Aorta (tissue), 5 donors: ENCODE measurements at regions of chr18 and their contacts with region 1.

Region 1: DNA sequence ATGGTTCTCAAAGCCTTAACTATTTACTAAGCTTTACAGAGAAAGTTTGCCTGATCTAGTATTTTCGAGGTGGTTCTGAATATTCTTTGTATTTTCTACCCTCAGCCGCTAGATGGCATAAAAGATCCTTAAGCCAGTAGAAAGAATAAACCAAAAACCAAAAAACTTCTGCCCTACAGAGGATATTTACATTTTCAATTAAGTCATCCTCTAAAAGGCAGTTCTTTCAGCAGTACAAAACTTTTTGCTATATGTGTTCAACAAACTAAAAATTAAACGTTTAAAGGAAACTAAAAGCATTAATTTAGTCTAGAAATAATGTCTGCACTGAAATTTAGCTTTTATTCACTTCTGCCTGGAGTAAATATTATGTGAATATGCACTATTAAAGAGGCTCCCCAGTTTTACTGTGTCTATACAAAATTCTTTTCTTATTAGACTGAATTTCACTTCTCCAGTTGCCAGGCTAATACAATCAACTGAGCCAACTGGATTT is 297.5 kb downstream of the PIEZO2 start:
- DNase-seq: no peak
- ATAC-seq: peak; percentile 67
- H3K4me3 ChIP-seq: no peak overlapping the region
- H3K27ac ChIP-seq: no peak overlapping the region
- H3K4me1 ChIP-seq: no peaks in the 10 kb centered on the region
- H3K27me3 ChIP-seq: no peaks in the 10 kb centered on the region

Region 2: GRCh38 chr18:10936176-10937053 is 84.5 kb after region 1 on chr18:
- intact Hi-C with region 1: no loop called
- DNase-seq: no peak
- ATAC-seq: no peak
- H3K4me3 ChIP-seq: no peak overlapping the region
- H3K27ac ChIP-seq: peak overlapping the region in 1 of 2 donors; percentile 28
- H3K4me1 ChIP-seq: peaks cover 0 to 8% of the 10 kb centered on the region in 2 donors
- H3K27me3 ChIP-seq: no peaks in the 10 kb centered on the region

Region 3: DNA sequence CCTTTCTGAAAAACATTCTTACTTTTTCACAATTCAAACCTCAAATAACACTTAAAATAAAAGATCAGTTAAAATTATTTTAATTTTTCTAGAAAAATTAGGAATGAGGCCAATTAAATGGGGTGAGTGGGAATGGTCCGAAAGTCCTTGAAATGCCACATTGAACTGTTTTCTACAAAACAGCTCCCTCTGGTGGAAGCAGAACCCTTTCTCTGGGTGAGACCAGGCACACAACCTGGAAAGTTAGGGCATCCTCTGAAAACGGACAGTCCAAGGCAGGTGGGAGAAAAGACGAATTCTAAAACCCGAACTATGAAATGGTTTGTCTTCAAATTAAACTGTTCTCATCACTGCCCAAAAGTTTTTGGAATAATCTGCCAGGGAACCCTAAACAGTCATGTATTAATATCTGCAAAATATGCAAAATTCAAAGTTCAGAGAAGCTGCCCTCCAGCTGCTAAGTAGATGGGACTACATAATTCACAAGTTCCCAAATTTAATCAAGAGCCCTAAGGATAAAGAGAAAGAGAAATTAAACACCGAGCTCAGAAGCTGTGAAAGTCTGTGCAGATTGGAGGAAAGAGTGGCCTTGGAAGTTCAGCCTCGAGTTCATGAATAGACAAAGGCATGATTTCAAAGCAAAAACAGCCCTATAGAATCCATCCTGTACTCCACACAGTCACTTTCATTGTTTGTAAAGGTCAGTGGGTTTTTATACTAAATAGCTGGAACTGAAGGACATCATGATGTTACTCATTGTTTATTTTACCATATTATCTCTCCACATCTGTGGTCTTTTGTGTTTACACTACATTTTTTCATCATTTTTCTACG is 189.2 kb after region 1 on chr18:
- intact Hi-C with region 1: loop called (anchors 2 to 5 kb)
- DNase-seq: no peak
- ATAC-seq: peak; percentile 69
- H3K4me3 ChIP-seq: no peak overlapping the region
- H3K27ac ChIP-seq: no peak overlapping the region
- H3K4me1 ChIP-seq: no peaks in the 10 kb centered on the region
- H3K27me3 ChIP-seq: no peaks in the 10 kb centered on the region

Region 4: DNA sequence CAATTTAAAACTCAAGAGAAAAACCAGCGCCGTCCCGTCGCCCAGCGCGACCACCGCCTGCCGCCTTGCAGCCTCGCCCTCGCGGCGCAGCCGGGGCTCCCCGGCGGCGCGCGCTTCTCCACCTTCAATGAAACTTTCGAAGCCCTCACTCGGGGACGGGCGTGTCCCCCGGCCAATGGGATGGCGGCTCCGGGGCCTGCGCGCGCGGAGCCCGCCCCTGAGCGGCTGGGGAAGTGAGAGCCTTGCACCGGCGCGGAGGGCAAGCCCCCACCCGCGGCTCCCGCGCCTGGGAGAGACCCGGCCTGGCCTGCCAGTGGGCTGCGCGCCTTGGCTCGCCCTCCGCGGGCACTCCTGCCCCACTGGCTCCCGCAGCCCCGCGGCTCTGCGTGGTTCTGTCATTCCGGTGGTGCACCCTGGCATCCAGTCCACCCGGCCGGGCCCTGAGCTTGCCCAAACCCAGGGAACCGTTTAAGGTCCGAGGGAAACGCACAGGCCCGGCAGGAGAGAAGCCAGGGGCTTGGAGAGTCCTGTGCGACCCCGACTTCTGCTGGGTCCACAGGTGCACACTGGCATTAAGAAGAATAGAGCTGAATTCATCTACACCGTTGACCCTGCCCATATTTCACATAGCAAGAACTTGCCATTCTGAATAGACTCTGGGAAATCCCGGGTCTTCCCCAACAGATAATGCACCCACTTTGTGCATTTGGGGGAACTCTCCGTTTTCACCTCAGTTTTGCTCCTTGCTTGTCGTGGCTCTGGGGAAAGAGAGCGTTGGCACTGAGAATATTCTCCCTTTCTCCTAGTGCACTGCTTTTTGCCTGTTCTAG is 297.8 kb after region 1 on chr18 and contains the start of gene PIEZO2:
- intact Hi-C with region 1: loop called (anchors 2 kb)
- DNase-seq: peak; percentile 80 to 89
- ATAC-seq: peak; percentile 78
- H3K4me3 ChIP-seq: peak within 1 kb of the TSS; percentile 45 to 61
- H3K27ac ChIP-seq: no peak within 1 kb of the TSS
- H3K4me1 ChIP-seq: no peaks in the 10 kb centered on the region
- H3K27me3 ChIP-seq: no peaks in the 10 kb centered on the region
- total RNA-seq, gene PIEZO2: 2.3 to 8.8 TPM